ENCODE measurements at regions of chr16 and their contacts with region 1.

Region 1: GRCh38 chr16:75402821-75403475 is 30.4 kb downstream of the CFDP1 start:
- H3K4me3 Mint-ChIP-seq: no peak overlapping the region
- H3K27ac Mint-ChIP-seq: no peak overlapping the region
- H3K4me1 Mint-ChIP-seq: no peaks in the 10 kb centered on the region
- H3K27me3 Mint-ChIP-seq: peaks cover 10% of the 10 kb centered on the region

Region 2: DNA sequence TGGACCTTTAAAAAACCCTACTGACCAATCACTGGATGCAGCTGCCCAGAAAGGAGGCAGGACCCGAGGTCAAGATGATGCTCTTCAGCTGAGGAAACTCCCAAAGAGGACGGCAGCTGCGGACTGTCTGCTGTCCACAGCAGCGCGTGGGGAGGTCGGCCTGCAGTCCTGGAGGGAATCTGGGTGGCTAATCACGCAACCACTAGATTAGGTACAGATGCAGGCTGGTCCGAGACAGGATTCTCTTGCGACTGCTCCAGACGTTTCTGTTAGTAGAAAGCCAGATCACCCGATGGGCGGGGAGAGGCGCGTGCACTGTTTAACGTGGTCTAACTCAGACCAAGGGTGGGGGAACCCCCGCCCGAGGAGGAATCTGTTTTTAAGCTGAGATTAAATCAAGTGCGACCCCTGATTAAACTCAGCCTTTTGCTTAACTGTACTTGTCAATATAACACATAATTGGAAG is 204.8 kb before region 1 on chr16:
- intact Hi-C with region 1: loop called (anchors 1 kb)
- H3K4me3 Mint-ChIP-seq: no peak overlapping the region
- H3K27ac Mint-ChIP-seq: no peak overlapping the region
- H3K4me1 Mint-ChIP-seq: peaks cover 6% of the 10 kb centered on the region
- H3K27me3 Mint-ChIP-seq: peaks cover 94% of the 10 kb centered on the region

Region 3: DNA sequence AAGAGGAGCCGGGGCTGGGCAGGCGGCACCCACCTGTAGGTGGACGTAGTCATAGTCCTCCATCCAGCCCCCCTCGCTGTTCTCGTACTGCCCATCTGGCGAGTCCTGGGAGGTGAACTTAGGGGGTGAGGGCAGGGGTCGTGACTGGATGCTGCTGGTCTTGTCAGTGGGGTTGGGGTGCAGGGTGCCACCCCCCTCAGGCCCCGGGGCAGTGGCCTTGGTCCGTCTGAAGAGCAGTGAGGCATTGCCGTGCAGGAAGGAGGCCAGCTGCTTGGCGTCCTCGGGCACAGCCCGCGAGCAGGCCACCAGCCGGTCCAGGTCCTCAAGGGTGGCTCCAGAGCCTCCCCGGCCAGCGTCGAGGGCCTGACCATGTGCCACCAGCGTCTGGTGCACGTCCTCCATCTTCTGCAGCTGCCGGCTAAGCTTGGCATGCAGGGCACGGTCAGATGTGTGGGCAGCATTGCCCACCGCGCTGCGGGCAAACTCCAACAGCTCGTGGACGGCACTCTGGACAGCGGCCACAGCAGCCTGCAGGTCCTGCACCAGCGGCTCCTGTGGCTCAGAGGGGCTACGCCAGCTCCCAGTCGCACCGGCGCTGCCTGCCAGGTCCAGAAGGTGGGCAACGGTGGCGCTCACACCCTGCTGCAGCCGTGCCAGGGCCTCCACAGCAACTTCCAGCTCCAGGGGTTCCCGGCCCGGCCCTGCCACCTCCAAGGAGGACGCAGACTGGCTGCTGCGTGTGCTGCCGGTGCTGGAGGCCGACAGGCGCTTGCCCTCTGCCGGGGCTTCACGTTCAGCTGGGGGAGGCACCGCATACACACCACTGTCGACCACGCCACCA is 167.9 kb before region 1 on chr16:
- intact Hi-C with region 1: loop called (anchors 1 kb)
- H3K4me3 Mint-ChIP-seq: no peak overlapping the region
- H3K27ac Mint-ChIP-seq: no peak overlapping the region
- H3K4me1 Mint-ChIP-seq: no peaks in the 10 kb centered on the region
- H3K27me3 Mint-ChIP-seq: peaks cover 99% of the 10 kb centered on the region

Region 4: GRCh38 chr16:75764154-75764768 is 361.3 kb after region 1 on chr16:
- intact Hi-C with region 1: loop called (anchors 5 kb)
- H3K4me3 Mint-ChIP-seq: no peak overlapping the region
- H3K27ac Mint-ChIP-seq: no peak overlapping the region
- H3K4me1 Mint-ChIP-seq: no peaks in the 10 kb centered on the region
- H3K27me3 Mint-ChIP-seq: peaks cover 5% of the 10 kb centered on the region

Region 5: DNA sequence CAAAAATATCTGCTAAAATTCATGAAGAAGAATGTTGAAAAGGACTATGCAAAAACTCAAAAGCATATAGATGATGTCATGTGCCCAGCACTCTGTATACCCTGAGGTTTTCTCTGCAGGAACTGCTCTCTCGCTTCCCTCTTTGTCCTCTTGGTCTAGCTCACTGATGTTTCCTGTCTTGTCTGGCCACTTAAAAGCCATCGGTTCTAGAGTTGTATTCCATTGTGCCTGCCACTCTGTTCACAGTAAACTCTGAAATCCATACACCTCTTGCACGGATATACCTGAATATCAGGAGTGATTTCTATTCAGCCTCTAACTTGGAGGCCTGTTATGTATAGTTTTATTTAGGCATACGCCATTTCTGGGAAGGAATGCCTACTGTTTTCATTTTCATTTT is 773.2 kb after region 1 on chr16:
- intact Hi-C with region 1: no loop called
- H3K4me3 Mint-ChIP-seq: no peak overlapping the region
- H3K27ac Mint-ChIP-seq: no peak overlapping the region
- H3K4me1 Mint-ChIP-seq: no peaks in the 10 kb centered on the region
- H3K27me3 Mint-ChIP-seq: no peaks in the 10 kb centered on the region

Measured in dendritic cell treated with granulocyte-macrophage colony-stimulating factor and Interleukin-4, amounts not matched to agents 40 ng/mL and 50 ng/mL, for 4 days (primary cell).